Left ventricle myocardium inferior (tissue), 1 donor: ENCODE measurements at regions of chr1 and their contacts with region 1.

Region 1: DNA sequence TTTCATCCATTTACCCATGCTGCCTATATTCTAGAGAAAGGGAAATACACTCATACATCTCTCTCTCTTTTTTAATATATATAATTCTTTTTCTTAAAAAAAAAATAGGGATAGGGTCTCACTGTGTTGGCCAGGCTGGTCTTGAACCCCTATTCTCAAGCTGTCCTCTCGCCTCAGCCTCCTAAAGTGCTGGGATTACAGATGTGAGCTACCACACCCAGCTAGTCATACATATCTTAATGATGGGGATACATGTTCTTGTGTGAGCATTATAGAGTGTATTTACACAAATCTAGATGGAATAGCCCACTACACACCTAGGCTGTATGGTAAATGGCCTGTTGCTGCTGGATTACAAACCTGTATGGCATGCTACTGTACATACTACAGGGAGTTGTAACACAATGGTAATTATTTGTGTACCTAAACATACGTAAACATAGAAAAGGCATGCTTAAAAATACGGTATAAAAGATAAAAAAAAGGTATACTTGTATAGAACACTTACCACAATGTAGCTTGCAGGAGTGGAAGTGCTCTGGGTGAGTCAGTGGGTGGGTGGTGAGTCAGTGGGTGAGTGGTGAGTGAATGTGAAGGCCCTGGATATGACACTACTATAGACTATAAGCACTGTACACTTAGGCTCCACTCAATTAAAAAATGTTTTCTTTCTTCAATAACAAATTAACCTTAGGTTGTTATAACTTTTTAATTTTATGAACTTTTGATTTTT is 72.9 kb downstream of the IVNS1ABP start:
- DNase-seq: no peak
- H3K4me3 ChIP-seq: no peak overlapping the region
- H3K27ac ChIP-seq: no peak overlapping the region
- H3K4me1 ChIP-seq: peaks cover 25% of the 10 kb centered on the region
- H3K27me3 ChIP-seq: no peaks in the 10 kb centered on the region
- CTCF ChIP-seq: no peak

Region 2: GRCh38 chr1:185050823-185051451 is 193.2 kb before region 1 on chr1:
- intact Hi-C with region 1: no loop called
- DNase-seq: no peak
- H3K4me3 ChIP-seq: no peak overlapping the region
- H3K27ac ChIP-seq: no peak overlapping the region
- H3K4me1 ChIP-seq: peaks cover 44% of the 10 kb centered on the region
- H3K27me3 ChIP-seq: no peaks in the 10 kb centered on the region
- CTCF ChIP-seq: no peak

Region 3: GRCh38 chr1:185670187-185670627 is 426.0 kb after region 1 on chr1:
- intact Hi-C with region 1: loop called (anchors 10 kb)
- DNase-seq: no peak
- H3K4me3 ChIP-seq: peak overlapping the region; percentile 5
- H3K27ac ChIP-seq: peak overlapping the region; percentile 5
- H3K4me1 ChIP-seq: peaks cover 50% of the 10 kb centered on the region
- H3K27me3 ChIP-seq: no peaks in the 10 kb centered on the region
- CTCF ChIP-seq: peak; percentile 72